PC-9 (cell line): ENCODE measurements at regions of chr9 and their contacts with region 1.

Region 1: GRCh38 chr9:136093995-136094881 is 851 bp downstream of the NACC2 start:
- DNase-seq: peak in 1 of 2 experiments; percentile 76
- H3K4me3 ChIP-seq: peak overlapping the region; percentile 88
- H3K27ac ChIP-seq: no peak overlapping the region
- H3K4me1 ChIP-seq: peaks cover 22% of the 10 kb centered on the region
- H3K27me3 ChIP-seq: no peaks in the 10 kb centered on the region
- CTCF ChIP-seq: no peak

Region 2: GRCh38 chr9:135126535-135127187 is 967.6 kb before region 1 on chr9:
- CTCF ChIA-PET with region 1: no interaction called
- POLR2A ChIA-PET with region 1: no interaction called
- intact Hi-C with region 1: no loop called
- DNase-seq: no peak
- H3K4me3 ChIP-seq: no peak overlapping the region
- H3K27ac ChIP-seq: no peak overlapping the region
- H3K4me1 ChIP-seq: no peaks in the 10 kb centered on the region
- H3K27me3 ChIP-seq: peaks cover 91% of the 10 kb centered on the region
- CTCF ChIP-seq: no peak

Region 3: GRCh38 chr9:136109351-136110081 is 15.3 kb after region 1 on chr9:
- CTCF ChIA-PET with region 1: no interaction called
- POLR2A ChIA-PET with region 1: interaction called, 11 read pairs
- intact Hi-C with region 1: loop called (anchors 2 kb)
- DNase-seq: peak; percentile 73 to 99
- H3K4me3 ChIP-seq: peak overlapping the region; percentile 45; the same call in 1 of the 2 replicates
- H3K27ac ChIP-seq: no peak overlapping the region
- H3K4me1 ChIP-seq: peaks cover 7% of the 10 kb centered on the region; the same call in 1 of the 2 replicates
- H3K27me3 ChIP-seq: peaks cover 15% of the 10 kb centered on the region; the same call in 1 of the 2 replicates
- CTCF ChIP-seq: no peak